ENCODE measurements at regions of chr14 and their contacts with region 1.

Region 1: DNA sequence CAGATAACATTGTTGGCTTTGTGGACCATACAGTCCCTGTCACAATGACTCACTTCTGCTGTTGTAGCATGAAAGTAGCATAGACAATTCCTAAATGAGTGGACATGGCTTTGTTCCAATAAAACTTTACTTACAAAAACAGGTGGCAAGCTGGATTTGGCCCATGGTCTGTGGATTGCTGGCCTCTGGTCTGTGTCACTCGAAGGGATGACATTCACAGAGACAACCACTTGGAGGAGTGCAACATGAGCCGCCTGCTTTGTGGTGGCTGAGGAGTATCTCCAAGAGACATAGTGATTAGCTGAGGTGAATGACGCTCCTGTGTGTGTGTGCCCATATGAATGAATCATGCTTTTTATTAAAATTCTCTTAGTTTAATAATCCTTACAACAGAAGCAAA is 81.3 kb upstream of the NRXN3 start:
- DNase-seq: no peak
- H3K4me3 ChIP-seq: no peak overlapping the region
- H3K27ac ChIP-seq: no peak overlapping the region
- H3K4me1 ChIP-seq: no peaks in the 10 kb centered on the region
- CTCF ChIP-seq: no peak

Region 2: GRCh38 chr14:78074561-78074960 is 14.4 kb before region 1 on chr14:
- CTCF ChIA-PET with region 1: no interaction called
- POLR2A ChIA-PET with region 1: no interaction called
- intact Hi-C with region 1: no loop called
- DNase-seq: no peak
- H3K4me3 ChIP-seq: no peak overlapping the region
- H3K27ac ChIP-seq: no peak overlapping the region
- H3K4me1 ChIP-seq: no peaks in the 10 kb centered on the region
- CTCF ChIP-seq: no peak

Region 3: DNA sequence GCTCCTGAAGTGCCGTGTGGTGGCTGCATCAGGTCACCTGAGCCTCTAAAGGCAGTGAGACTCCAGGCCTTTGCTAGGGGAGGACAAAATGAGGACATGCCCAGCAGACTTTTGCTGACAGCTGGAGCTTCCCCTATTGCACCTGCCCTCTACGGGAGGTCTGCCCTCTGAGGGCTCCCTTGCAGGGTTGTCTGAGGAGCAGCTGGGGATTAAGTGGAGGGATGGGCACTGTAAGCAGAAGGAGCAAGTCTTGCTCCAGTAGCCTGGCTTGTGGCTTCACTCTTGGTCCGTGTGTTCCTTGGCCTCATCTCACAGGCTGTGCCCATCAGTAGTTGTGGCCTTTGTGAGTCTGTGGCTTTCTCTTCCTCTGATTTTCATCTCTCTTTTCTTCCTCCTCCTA is 14.4 kb after region 1 on chr14:
- CTCF ChIA-PET with region 1: no interaction called
- POLR2A ChIA-PET with region 1: interaction called, 10 read pairs
- intact Hi-C with region 1: no loop called
- DNase-seq: no peak
- H3K4me3 ChIP-seq: no peak overlapping the region
- H3K27ac ChIP-seq: no peak overlapping the region
- H3K4me1 ChIP-seq: no peaks in the 10 kb centered on the region
- CTCF ChIP-seq: no peak

Measured in OCI-LY7 (cell line).